Heart left ventricle (tissue), 16 donors: ENCODE measurements at regions of chr11 and their contacts with region 1.

Region 1: DNA sequence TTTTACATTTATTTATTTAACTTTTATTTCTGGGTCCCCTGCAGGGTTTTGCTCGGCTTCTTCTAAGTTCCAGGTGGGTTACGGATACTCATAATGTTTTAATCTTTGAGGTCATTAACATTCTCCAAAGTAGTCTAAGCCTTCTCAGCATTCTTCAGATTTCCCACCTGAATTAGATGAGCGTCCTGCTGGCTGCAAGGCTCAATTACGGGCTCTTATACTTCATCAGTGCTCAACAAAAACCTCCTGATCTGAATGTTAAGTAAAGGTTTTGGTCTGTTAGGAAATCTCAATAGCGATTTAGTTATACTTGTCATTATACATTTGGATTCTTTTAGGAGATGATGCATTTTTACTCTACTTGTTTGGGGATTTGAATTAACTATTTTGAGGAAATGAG is 27.3 kb upstream of the NFRKB start:
- DNase-seq: no peak
- ATAC-seq: no peak
- H3K4me3 ChIP-seq: no peak overlapping the region
- H3K27ac ChIP-seq: no peak overlapping the region
- H3K4me1 ChIP-seq: peaks cover 0 to 4% (median 0%) of the 10 kb centered on the region in 12 donors
- H3K27me3 ChIP-seq: no peaks in the 10 kb centered on the region
- CTCF ChIP-seq: no peak
- POLR2A ChIP-seq: no peak

Region 2: GRCh38 chr11:129595038-129595962 is 327.4 kb before region 1 on chr11:
- intact Hi-C with region 1: no loop called
- DNase-seq: no peak
- ATAC-seq: no peak
- H3K4me3 ChIP-seq: no peak overlapping the region
- H3K27ac ChIP-seq: no peak overlapping the region
- H3K4me1 ChIP-seq: no peaks in the 10 kb centered on the region
- H3K27me3 ChIP-seq: peaks cover 0 to 15% (median 0%) of the 10 kb centered on the region in 9 donors
- CTCF ChIP-seq: no peak
- POLR2A ChIP-seq: no peak

Region 3: GRCh38 chr11:129803533-129803932 is 119.1 kb before region 1 on chr11:
- intact Hi-C with region 1: no loop called
- DNase-seq: no peak
- ATAC-seq: no peak
- H3K4me3 ChIP-seq: no peak overlapping the region
- H3K27ac ChIP-seq: no peak overlapping the region
- H3K4me1 ChIP-seq: no peaks in the 10 kb centered on the region
- H3K27me3 ChIP-seq: peaks cover 0 to 5% (median 0%) of the 10 kb centered on the region in 9 donors
- CTCF ChIP-seq: no peak
- POLR2A ChIP-seq: no peak

Region 4: DNA sequence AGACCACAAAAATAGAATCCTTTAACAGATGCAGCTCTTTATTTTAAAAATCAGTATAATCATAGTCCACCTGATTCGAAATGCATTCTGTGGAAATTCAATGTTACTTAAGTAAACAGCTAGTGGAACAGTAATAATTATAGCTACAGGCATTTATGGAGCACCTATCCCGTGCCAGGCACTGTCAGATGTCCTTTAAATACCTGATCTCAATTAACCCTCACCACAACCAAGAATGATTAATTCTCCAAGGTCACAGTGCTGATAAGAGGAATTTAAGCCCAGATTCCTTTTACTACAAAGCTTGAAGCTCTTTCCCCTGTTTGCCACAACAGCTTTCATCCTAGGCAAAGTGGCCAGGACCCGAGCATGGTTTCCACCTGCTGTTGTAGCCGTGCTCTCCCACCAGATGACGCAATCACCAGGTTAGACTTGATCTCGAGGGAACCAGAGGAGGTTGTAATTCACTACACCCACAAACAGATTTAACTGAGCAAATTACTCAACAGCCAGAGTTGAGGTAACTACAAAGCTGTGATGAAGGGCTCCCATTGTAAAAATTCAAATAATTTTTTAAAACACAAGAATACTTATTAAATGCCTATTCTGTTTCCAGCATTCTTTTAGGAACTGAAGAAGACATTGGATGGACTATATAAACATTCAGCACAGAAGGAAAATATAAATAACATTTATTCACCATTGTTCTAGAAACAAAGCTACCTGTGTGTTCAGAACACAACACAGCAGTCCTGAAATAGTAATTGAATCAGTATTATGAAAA is 69.7 kb after region 1 on chr11:
- intact Hi-C with region 1: loop called in 1 of 10 experiments (anchors 10 kb)
- DNase-seq: no peak
- ATAC-seq: peak in 3 of 4 donors; percentile 54 to 72 (median 57)
- H3K4me3 ChIP-seq: no peak overlapping the region
- H3K27ac ChIP-seq: no peak overlapping the region
- H3K4me1 ChIP-seq: peaks cover 0 to 25% (median 12%) of the 10 kb centered on the region in 12 donors
- H3K27me3 ChIP-seq: no peaks in the 10 kb centered on the region
- CTCF ChIP-seq: peak in 7 of 12 donors; percentile 16 to 39 (median 33)
- POLR2A ChIP-seq: no peak

Region 5: GRCh38 chr11:130002846-130003716 is 80.4 kb after region 1 on chr11:
- intact Hi-C with region 1: loop called in 3 of 10 experiments (anchors 5 to 10 kb)
- DNase-seq: peak; percentile 95 to 97 (median 96)
- ATAC-seq: peak; percentile 90 to 95 (median 92)
- H3K4me3 ChIP-seq: peak overlapping the region; percentile 55 to 94 (median 80)
- H3K27ac ChIP-seq: peak overlapping the region; percentile 95 to 100 (median 100)
- H3K4me1 ChIP-seq: peaks cover 0 to 25% (median 19%) of the 10 kb centered on the region in 12 donors
- H3K27me3 ChIP-seq: no peaks in the 10 kb centered on the region
- CTCF ChIP-seq: no peak
- POLR2A ChIP-seq: peak; percentile 67 to 90

Region 6: DNA sequence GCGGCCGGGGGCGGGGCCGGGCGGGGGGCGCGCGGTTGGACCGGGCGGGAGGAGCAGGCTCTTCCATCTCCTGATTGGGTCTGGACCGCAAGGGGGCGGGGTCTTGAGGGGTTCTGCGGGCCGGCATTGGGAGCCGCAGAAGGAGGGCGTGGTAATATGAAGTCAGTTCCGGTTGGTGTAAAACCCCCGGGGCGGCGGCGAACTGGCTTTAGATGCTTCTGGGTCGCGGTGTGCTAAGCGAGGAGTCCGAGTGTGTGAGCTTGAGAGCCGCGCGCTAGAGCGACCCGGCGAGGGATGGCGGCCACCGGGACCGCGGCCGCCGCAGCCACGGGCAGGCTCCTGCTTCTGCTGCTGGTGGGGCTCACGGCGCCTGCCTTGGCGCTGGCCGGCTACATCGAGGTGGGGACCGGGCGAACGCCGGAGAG is 147.0 kb after region 1 on chr11 and contains the start of gene APLP2:
- intact Hi-C with region 1: loop called in 1 of 10 experiments (anchors 5 kb)
- DNase-seq: peak; percentile 99 to 100 (median 100)
- ATAC-seq: peak; percentile 94 to 98 (median 97)
- H3K4me3 ChIP-seq: peak within 1 kb of the TSS; percentile 59 to 99 (median 82)
- H3K27ac ChIP-seq: peak within 1 kb of the TSS; percentile 78 to 98 (median 95)
- H3K4me1 ChIP-seq: peaks cover 0 to 30% (median 20%) of the 10 kb centered on the region in 12 donors
- H3K27me3 ChIP-seq: no peaks in the 10 kb centered on the region
- CTCF ChIP-seq: no peak
- POLR2A ChIP-seq: peak; percentile 33 to 88
- total RNA-seq, gene APLP2: 215 to 423 (median 334) TPM